ENCODE measurements at regions of chr14 and their contacts with region 1.

Region 1: GRCh38 chr14:101120641-101121507 is 217.4 kb upstream of the RTL1 start:
- DNase-seq: no peak
- H3K4me3 ChIP-seq: no peak overlapping the region
- H3K27ac ChIP-seq: no peak overlapping the region
- H3K4me1 ChIP-seq: no peaks in the 10 kb centered on the region
- H3K27me3 ChIP-seq: no peaks in the 10 kb centered on the region
- CTCF ChIP-seq: no peak

Region 2: DNA sequence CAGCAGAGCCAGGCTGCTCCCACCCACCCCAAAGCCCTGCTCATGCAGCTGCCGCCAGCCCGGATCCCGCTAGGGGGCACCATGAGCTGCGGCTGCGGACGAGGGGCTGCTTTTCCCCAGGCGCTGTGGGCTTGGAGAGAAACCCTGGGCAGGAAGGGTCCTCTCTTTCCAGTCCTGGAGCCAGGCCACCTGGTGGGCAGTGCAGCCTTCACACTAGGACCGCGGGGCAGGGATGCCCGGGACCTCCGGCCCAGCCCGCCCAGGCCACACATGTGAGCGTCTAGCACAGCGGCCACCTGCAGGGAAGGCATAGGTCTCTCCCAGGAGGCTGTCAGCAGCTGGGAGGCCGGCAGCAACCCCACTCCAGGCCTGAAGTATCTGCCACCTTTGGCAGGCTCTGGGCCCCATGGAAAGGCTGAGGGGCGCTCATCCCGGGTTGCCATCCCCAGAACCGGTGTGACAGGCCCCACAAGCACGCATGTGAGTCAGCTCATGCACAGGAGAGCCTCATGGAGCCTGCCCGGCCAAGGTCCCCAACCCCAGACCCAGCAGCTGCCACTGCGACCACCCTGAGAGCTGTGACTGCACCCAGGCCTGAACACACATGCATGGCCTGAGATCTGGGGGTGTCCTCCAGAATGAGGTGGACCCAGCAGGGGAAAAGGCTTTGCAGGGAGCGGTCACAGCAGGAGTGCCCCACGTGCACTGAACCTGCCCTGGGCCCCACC is 62.7 kb after region 1 on chr14:
- CTCF ChIA-PET with region 1: no interaction called
- dilution Hi-C with region 1: loop called (anchors 5 kb)
- in situ Hi-C with region 1: no loop called
- intact Hi-C with region 1: no loop called
- DNase-seq: no peak
- H3K4me3 ChIP-seq: no peak overlapping the region
- H3K27ac ChIP-seq: no peak overlapping the region
- H3K4me1 ChIP-seq: no peaks in the 10 kb centered on the region
- H3K27me3 ChIP-seq: no peaks in the 10 kb centered on the region
- CTCF ChIP-seq: peak in 1 of 2 donors; percentile 26

Measured in mammary epithelial cell (primary cell).